Activated B cell treated with CpG ODN at 0.5 μM for 24 hours (primary cell): ENCODE measurements at regions of chr14 and their contacts with region 1.

Region 1: DNA sequence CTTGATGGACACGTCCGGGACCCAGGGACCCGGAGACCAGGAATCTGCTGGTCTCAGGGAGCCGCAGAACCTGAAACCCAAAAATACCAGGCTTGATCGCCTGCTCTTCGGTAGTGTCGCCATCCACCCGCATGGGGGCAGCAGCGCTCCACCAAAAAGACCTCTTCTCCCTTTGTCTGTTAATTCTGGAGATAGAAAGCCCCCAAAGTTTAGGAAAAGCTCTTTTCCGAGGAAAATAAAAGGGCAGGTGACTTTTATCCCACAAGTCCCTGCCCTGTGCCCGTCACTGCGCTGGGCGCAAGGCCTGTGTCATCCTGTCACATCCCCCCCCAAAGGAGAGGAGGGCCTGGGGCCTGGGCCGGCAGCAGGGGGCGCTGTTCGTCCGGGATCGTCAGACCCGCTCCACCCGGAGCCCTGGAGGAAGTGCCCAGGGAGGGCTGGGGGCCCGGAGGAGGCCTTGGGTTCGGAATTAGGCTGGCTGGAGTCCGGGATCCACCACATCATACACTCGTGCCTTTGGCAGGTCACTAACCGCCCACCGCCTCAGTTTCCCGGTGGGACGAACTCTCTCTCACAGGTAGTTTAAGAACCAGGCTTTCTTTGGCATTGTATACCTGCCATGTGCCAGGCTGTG is 31.9 kb downstream of the DAD1 start:
- DNase-seq: peak; percentile 90
- ATAC-seq: peak; percentile 43
- H3K4me3 Mint-ChIP-seq: peak overlapping the region; percentile 80
- H3K27ac Mint-ChIP-seq: peak overlapping the region; percentile 98
- H3K4me1 Mint-ChIP-seq: peaks cover 88% of the 10 kb centered on the region
- H3K27me3 Mint-ChIP-seq: peaks cover 4% of the 10 kb centered on the region
- CTCF ChIP-seq: peak; percentile 100

Region 2: GRCh38 chr14:22200977-22201605 is 356.0 kb before region 1 on chr14:
- CTCF ChIA-PET with region 1: no interaction called
- POLR2A ChIA-PET with region 1: no interaction called
- intact Hi-C with region 1: no loop called
- DNase-seq: no peak
- ATAC-seq: peak; percentile 72
- H3K4me3 Mint-ChIP-seq: no peak overlapping the region
- H3K27ac Mint-ChIP-seq: no peak overlapping the region
- H3K4me1 Mint-ChIP-seq: no peaks in the 10 kb centered on the region
- H3K27me3 Mint-ChIP-seq: peaks cover 15% of the 10 kb centered on the region
- CTCF ChIP-seq: no peak

Region 3: DNA sequence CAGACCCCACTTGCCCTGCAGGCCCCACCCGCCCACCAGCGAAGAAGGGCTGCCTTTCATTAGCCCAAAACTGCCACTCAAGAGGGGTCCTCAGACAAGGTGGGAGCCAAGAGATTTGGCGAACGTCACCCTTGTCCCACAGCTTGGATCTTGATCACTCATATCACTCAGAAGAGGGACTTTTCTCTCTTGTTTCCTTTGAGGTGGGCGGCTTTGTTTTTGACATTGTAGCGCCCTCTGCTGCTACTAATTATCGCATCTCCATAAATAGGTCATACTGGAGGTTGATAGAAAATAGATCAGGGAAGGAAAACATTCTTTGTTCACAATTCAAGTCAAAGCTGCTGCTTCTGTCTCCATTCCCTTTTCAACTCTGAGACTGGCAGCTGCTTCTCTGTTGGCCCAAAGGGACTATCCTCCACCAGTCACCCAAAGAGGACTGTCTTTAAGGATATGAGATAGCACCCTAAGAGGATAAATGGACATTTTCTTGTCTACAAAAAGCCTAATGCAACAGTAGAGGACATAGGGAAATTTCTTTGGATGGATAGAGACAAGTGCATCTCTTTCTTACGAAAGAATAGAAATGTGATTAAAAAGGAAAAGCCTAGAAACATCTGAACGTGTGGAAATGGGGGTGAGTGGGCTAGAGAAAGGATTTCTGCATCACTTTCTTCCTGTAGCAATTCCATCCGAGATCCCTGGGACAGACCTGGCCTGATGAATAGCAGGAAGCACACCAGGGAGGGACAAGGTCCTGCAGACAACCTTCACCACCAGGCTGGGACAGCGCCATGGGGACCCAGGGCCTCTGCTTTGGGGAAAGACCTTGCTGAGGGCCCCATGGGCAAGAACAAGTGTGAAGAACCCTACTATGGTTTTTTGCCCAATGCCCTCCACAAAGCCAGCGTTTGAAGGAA is 83.9 kb before region 1 on chr14:
- CTCF ChIA-PET with region 1: interaction called, 52 read pairs
- POLR2A ChIA-PET with region 1: interaction called, 243 read pairs
- intact Hi-C with region 1: loop called (anchors 1 kb)
- DNase-seq: no peak
- ATAC-seq: peak; percentile 64
- H3K4me3 Mint-ChIP-seq: peak overlapping the region; percentile 3
- H3K27ac Mint-ChIP-seq: peak overlapping the region; percentile 65
- H3K4me1 Mint-ChIP-seq: peaks cover 89% of the 10 kb centered on the region
- H3K27me3 Mint-ChIP-seq: no peaks in the 10 kb centered on the region
- CTCF ChIP-seq: peak; percentile 40

Region 4: GRCh38 chr14:22505697-22506377 is 51.3 kb before region 1 on chr14:
- CTCF ChIA-PET with region 1: interaction called, 36 read pairs
- POLR2A ChIA-PET with region 1: interaction called, 98 read pairs
- intact Hi-C with region 1: loop called (anchors 1 kb)
- DNase-seq: no peak
- ATAC-seq: peak; percentile 29
- H3K4me3 Mint-ChIP-seq: peak overlapping the region; percentile 49
- H3K27ac Mint-ChIP-seq: peak overlapping the region; percentile 90
- H3K4me1 Mint-ChIP-seq: peaks cover 70% of the 10 kb centered on the region
- H3K27me3 Mint-ChIP-seq: no peaks in the 10 kb centered on the region
- CTCF ChIP-seq: no peak

Region 5: DNA sequence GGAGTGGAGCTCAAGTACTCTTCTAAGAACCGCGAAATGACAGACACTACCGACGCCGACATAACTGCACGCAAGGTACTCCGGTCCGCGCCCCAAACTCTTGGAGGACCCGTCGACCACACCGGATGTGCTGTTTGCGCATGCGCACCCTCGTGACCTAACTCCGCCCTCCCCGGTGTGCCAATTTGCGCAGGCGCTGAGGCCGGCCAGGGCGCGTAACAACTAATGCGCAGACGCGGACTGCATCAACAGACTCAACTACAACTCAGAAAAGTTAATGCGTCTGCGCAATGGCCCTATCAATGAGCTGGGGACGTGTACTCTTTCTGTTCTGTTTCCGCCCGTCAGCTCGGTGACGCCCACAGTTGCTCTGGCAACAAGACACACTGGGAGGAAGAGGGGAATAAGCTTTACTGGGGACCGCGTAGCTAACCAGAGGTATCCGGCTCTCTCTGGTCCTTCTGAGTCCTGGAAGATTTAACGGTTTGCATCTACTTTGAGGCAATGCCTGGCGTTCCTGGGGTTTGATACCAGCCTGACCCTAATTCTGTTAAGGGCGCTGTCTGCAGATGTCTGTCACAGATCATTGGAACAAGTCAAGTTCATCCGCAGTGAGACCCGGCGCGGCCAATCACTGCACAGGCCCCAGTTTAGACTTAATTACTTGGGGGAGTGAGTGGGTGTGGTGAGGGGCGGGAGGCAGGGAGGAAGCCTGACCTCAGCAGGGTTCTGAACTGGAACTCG is 32.2 kb after region 1 on chr14 and contains the start of gene DAD1:
- CTCF ChIA-PET with region 1: interaction called, 3 read pairs
- POLR2A ChIA-PET with region 1: interaction called, 19 read pairs
- intact Hi-C with region 1: loop called (anchors 1 kb)
- DNase-seq: peak; percentile 99
- ATAC-seq: peak; percentile 88
- H3K4me3 Mint-ChIP-seq: peak within 1 kb of the TSS; percentile 99
- H3K27ac Mint-ChIP-seq: peak within 1 kb of the TSS; percentile 100
- H3K4me1 Mint-ChIP-seq: peaks cover 57% of the 10 kb centered on the region
- H3K27me3 Mint-ChIP-seq: peaks cover 2% of the 10 kb centered on the region
- CTCF ChIP-seq: no peak
- total RNA-seq, gene DAD1: 123 and 139 TPM in 2 replicates

Region 6: DNA sequence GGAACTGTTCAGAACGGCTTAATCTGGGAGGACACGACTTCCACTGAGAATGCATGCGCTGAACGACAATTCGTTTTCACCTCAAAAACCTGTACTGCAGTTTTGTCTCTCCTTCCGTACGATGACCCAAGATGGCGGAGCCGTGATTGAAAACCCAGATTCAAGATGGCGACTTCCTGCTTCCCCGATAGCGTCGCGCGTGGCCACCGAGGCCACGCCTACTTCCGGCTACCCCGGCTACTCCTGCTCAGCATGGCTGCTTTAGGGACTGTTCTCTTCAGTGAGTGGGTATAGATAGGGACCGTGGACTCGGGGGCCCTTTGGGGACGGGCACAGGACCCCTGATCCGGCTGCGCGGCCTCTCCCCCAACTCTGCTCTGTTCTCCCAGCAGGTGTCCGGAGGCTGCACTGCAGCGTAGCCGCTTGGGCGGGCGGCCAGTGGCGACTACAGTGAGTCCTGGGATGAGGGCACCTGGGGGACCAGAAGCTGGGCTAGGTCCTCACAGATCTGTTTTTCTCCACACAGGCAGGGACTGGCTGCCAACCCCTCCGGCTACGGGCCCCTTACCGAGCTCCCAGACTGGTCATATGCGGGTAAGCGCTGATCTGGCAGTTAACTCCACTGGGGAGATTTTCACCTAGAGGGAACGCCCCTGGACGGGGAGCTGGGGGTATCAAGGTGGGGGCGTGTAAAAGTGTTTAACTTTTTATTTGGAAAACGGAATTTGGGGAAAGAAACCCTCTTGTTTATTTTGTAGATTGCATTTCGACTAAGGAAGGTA is 272.7 kb after region 1 on chr14 and contains the start of gene MRPL52:
- CTCF ChIA-PET with region 1: interaction called, 3 read pairs
- POLR2A ChIA-PET with region 1: no interaction called
- intact Hi-C with region 1: loop called (anchors 1 kb)
- DNase-seq: peak; percentile 76
- ATAC-seq: peak; percentile 94
- H3K4me3 Mint-ChIP-seq: peak within 1 kb of the TSS; percentile 93
- H3K27ac Mint-ChIP-seq: peak within 1 kb of the TSS; percentile 97
- H3K4me1 Mint-ChIP-seq: peaks cover 27% of the 10 kb centered on the region
- H3K27me3 Mint-ChIP-seq: no peaks in the 10 kb centered on the region
- CTCF ChIP-seq: no peak
- total RNA-seq, gene MRPL52: 142 and 150 TPM in 2 replicates

Region 7: DNA sequence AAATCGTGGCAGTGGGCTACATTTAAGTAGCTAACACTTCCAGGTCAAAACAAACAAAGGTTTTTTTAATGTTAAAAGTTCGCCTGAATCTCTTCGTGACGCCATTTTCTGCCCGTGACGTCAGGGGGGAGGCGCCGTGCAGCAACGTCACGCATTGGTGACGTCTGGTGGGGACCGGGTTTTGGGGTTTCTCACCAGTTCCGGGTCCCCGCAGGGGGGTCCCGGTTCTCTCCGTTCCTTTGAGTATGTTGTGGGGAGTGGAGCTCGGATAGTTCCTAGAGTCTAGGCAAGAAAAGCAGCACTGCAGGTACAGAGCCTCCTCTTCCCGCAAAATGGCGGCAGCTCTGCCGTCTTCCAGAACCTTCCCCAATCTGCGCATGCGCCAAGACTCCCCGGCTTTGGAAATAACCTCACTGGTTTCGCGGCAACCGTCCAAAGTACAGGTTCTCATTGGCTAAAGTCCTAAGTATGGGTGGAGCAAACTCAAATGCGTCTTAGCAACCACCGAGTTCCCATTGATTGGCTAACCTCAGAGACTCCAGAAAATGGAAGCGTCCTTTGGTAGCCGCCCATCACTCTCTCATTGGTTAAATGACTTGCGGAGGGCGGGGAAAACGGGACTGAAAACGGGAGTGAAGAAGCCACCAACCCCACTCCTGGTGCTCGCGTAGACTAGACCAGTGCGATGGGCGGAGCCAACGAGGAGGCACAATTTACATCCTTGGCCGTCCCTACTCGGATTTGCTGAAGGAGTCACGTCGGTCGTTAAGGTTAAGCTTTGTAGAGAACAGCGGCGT is 361.9 kb after region 1 on chr14 and contains the start of gene RBM23:
- CTCF ChIA-PET with region 1: no interaction called
- POLR2A ChIA-PET with region 1: interaction called, 11 read pairs
- intact Hi-C with region 1: no loop called
- DNase-seq: peak; percentile 94
- ATAC-seq: peak; percentile 94
- H3K4me3 Mint-ChIP-seq: peak within 1 kb of the TSS; percentile 99
- H3K27ac Mint-ChIP-seq: peak within 1 kb of the TSS; percentile 100
- H3K4me1 Mint-ChIP-seq: peaks cover 53% of the 10 kb centered on the region
- H3K27me3 Mint-ChIP-seq: no peaks in the 10 kb centered on the region
- CTCF ChIP-seq: no peak
- total RNA-seq, gene RBM23: 130 and 131 TPM in 2 replicates

Region 8: GRCh38 chr14:23104591-23105347 is 547.7 kb after region 1 on chr14 and contains the start of gene CIROP:
- CTCF ChIA-PET with region 1: no interaction called
- POLR2A ChIA-PET with region 1: no interaction called
- intact Hi-C with region 1: no loop called
- DNase-seq: no peak
- ATAC-seq: no peak
- H3K4me3 Mint-ChIP-seq: no peak within 1 kb of the TSS
- H3K27ac Mint-ChIP-seq: no peak within 1 kb of the TSS
- H3K4me1 Mint-ChIP-seq: peaks cover 7% of the 10 kb centered on the region
- H3K27me3 Mint-ChIP-seq: no peaks in the 10 kb centered on the region
- CTCF ChIP-seq: no peak
- total RNA-seq, gene CIROP: not detected in 2 replicates